Astrocyte of the cerebellum (primary cell): ENCODE measurements at regions of chr6 and their contacts with region 1.

Region 1: DNA sequence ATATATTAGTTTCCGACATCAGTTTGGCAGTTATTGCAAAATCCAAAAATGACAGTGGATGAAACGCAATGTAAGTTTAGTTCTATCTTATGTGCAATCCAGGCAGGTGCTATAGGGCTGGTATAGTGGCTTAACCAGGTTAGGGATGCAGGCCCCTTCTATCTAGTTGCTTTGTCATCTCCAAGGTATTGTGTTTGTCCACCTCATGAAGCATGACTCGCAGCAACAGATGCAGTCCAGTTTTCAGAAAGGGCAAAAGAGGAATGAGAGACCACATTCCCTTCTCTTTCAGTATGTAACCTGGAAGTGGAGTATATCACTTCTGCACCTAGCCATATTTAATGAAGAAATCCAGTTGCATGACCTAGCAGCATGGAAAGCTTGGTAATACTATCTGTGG is 59.7 kb downstream of the PKIB start:
- DNase-seq: no peak
- H3K4me3 ChIP-seq: no peak overlapping the region
- CTCF ChIP-seq: no peak

Region 2: GRCh38 chr6:122609856-122610689 is 59.8 kb before region 1 on chr6 and contains the start of gene PKIB:
- in situ Hi-C with region 1: loop called (anchors 5 kb)
- DNase-seq: peak; percentile 44
- H3K4me3 ChIP-seq: peak within 1 kb of the TSS; percentile 94
- CTCF ChIP-seq: peak; percentile 58

Region 3: GRCh38 chr6:122631571-122632225 is 38.2 kb before region 1 on chr6:
- in situ Hi-C with region 1: no loop called
- DNase-seq: no peak
- H3K4me3 ChIP-seq: no peak overlapping the region
- CTCF ChIP-seq: no peak